Activated naive CD4-positive, alpha-beta T cell treated with anti-CD3 and anti-CD28 coated beads for 36 hours (primary cell): ENCODE measurements at regions of chr15 and their contacts with region 1.

Region 1: DNA sequence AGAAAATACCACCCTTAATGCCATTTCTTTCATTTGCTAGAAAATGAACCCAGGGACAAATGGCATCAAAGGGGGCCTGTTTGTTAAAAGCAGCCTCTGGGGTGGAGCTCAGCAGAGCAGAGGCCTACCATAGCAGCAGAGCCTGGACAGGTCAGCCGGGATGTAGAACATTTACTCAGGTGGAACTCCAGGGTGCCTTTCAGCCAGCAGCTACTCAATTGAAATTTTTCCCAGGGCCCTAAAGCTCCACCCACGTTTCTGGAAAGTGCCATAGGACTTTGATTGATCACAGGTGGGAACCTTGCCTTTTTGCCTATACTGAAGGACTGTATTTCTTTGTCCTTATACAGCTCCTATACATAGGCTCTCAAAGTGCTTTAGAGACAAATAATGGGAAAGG is 74.5 kb upstream of the C15orf61 start:
- DNase-seq: no peak
- H3K4me3 Mint-ChIP-seq: no peak overlapping the region
- H3K27ac Mint-ChIP-seq: no peak overlapping the region
- H3K4me1 Mint-ChIP-seq: no peaks in the 10 kb centered on the region
- H3K27me3 Mint-ChIP-seq: no peaks in the 10 kb centered on the region

Region 2: GRCh38 chr15:67120839-67121643 is 325.4 kb before region 1 on chr15:
- CTCF ChIA-PET with region 1: no interaction called
- intact Hi-C with region 1: no loop called
- DNase-seq: peak; percentile 94
- H3K4me3 Mint-ChIP-seq: peak overlapping the region; percentile 70
- H3K27ac Mint-ChIP-seq: peak overlapping the region; percentile 95
- H3K4me1 Mint-ChIP-seq: peaks cover 80% of the 10 kb centered on the region
- H3K27me3 Mint-ChIP-seq: no peaks in the 10 kb centered on the region

Region 3: GRCh38 chr15:67150028-67150860 is 296.2 kb before region 1 on chr15:
- CTCF ChIA-PET with region 1: no interaction called
- intact Hi-C with region 1: no loop called
- DNase-seq: peak; percentile 72
- H3K4me3 Mint-ChIP-seq: peak overlapping the region; percentile 59
- H3K27ac Mint-ChIP-seq: peak overlapping the region; percentile 91
- H3K4me1 Mint-ChIP-seq: peaks cover 67% of the 10 kb centered on the region
- H3K27me3 Mint-ChIP-seq: no peaks in the 10 kb centered on the region

Region 4: DNA sequence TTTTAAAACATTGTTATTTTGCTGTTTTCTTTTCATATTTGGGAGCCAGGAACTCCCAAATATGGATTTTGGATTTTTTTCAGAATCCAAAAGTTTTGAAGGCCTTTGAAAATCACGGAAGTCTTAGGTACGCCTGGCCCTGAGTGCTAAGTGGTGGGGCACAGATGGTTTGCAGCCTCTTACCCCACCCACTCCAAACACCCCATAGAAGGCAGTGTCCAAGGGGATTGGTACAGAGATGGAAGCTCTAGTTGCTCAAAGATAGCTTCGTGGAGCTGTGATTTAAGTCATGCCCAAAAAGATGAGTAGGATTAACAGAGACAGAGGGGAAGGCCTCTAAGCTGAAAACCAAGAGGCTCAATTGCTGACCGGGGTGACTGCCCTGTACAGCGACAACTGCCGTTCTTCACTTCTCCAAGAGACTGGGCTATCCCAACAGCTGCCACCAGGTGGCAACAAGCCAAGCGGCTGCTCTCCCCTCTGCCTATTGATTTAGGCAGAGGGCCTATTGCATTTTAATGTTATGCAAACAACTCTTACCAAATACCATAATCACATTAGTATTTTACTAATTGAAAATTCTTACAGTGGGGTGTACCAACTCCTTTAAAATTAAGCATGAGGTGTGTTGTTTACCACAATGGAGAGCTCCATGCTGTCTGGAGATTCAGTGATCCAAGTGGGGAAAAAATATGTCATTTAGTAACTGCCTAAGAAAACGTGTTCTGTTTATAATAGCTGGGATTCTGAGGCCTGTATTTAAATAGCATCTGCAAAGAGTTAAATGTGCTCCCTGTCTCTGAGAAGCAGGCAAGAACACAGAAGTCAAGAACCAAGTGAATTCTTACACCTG is 10.5 kb after region 1 on chr15:
- CTCF ChIA-PET with region 1: interaction called, 11 read pairs
- intact Hi-C with region 1: no loop called
- DNase-seq: peak; percentile 91
- H3K4me3 Mint-ChIP-seq: no peak overlapping the region
- H3K27ac Mint-ChIP-seq: no peak overlapping the region
- H3K4me1 Mint-ChIP-seq: peaks cover 3% of the 10 kb centered on the region
- H3K27me3 Mint-ChIP-seq: no peaks in the 10 kb centered on the region

Region 5: GRCh38 chr15:68637767-68638404 is 1191.4 kb after region 1 on chr15:
- CTCF ChIA-PET with region 1: no interaction called
- intact Hi-C with region 1: no loop called
- DNase-seq: no peak
- H3K4me3 Mint-ChIP-seq: no peak overlapping the region
- H3K27ac Mint-ChIP-seq: no peak overlapping the region
- H3K4me1 Mint-ChIP-seq: no peaks in the 10 kb centered on the region
- H3K27me3 Mint-ChIP-seq: no peaks in the 10 kb centered on the region